ENCODE measurements at regions of chr2 and their contacts with region 1.

Region 1: GRCh38 chr2:43977677-43978375 is 18.0 kb downstream of the LRPPRC start:
- H3K4me3 Mint-ChIP-seq: no peak overlapping the region
- H3K27ac Mint-ChIP-seq: no peak overlapping the region
- H3K4me1 Mint-ChIP-seq: no peaks in the 10 kb centered on the region
- H3K27me3 Mint-ChIP-seq: no peaks in the 10 kb centered on the region

Region 2: GRCh38 chr2:43898134-43898837 is 79.5 kb before region 1 on chr2:
- intact Hi-C with region 1: loop called (anchors 5 kb)
- H3K4me3 Mint-ChIP-seq: no peak overlapping the region
- H3K27ac Mint-ChIP-seq: no peak overlapping the region
- H3K4me1 Mint-ChIP-seq: no peaks in the 10 kb centered on the region
- H3K27me3 Mint-ChIP-seq: no peaks in the 10 kb centered on the region

Region 3: GRCh38 chr2:43943809-43944452 is 33.9 kb before region 1 on chr2:
- intact Hi-C with region 1: loop called (anchors 5 kb)
- H3K4me3 Mint-ChIP-seq: no peak overlapping the region
- H3K27ac Mint-ChIP-seq: no peak overlapping the region
- H3K4me1 Mint-ChIP-seq: no peaks in the 10 kb centered on the region
- H3K27me3 Mint-ChIP-seq: no peaks in the 10 kb centered on the region